ENCODE measurements at regions of chr6 and their contacts with region 1.

Region 1: GRCh38 chr6:27132532-27133280 is 114.8 kb upstream of the PRSS16 start:
- DNase-seq: peak; percentile 95
- H3K4me3 Mint-ChIP-seq: no peak overlapping the region
- H3K27ac Mint-ChIP-seq: no peak overlapping the region
- H3K4me1 Mint-ChIP-seq: peaks cover 60% of the 10 kb centered on the region
- H3K27me3 Mint-ChIP-seq: no peaks in the 10 kb centered on the region

Region 2: GRCh38 chr6:26031595-26032339 is 1100.9 kb before region 1 on chr6:
- CTCF ChIA-PET with region 1: interaction called, 3 read pairs
- POLR2A ChIA-PET with region 1: interaction called, 22 read pairs
- DNase-seq: peak; percentile 92
- H3K4me3 Mint-ChIP-seq: peak overlapping the region; percentile 84
- H3K27ac Mint-ChIP-seq: peak overlapping the region; percentile 100
- H3K4me1 Mint-ChIP-seq: peaks cover 74% of the 10 kb centered on the region
- H3K27me3 Mint-ChIP-seq: peaks cover 4% of the 10 kb centered on the region

Region 3: GRCh38 chr6:26249957-26250697 is 882.6 kb before region 1 on chr6:
- CTCF ChIA-PET with region 1: no interaction called
- POLR2A ChIA-PET with region 1: interaction called, 51 read pairs
- DNase-seq: peak; percentile 84
- H3K4me3 Mint-ChIP-seq: peak overlapping the region; percentile 90
- H3K27ac Mint-ChIP-seq: peak overlapping the region; percentile 93
- H3K4me1 Mint-ChIP-seq: peaks cover 42% of the 10 kb centered on the region
- H3K27me3 Mint-ChIP-seq: no peaks in the 10 kb centered on the region

Region 4: DNA sequence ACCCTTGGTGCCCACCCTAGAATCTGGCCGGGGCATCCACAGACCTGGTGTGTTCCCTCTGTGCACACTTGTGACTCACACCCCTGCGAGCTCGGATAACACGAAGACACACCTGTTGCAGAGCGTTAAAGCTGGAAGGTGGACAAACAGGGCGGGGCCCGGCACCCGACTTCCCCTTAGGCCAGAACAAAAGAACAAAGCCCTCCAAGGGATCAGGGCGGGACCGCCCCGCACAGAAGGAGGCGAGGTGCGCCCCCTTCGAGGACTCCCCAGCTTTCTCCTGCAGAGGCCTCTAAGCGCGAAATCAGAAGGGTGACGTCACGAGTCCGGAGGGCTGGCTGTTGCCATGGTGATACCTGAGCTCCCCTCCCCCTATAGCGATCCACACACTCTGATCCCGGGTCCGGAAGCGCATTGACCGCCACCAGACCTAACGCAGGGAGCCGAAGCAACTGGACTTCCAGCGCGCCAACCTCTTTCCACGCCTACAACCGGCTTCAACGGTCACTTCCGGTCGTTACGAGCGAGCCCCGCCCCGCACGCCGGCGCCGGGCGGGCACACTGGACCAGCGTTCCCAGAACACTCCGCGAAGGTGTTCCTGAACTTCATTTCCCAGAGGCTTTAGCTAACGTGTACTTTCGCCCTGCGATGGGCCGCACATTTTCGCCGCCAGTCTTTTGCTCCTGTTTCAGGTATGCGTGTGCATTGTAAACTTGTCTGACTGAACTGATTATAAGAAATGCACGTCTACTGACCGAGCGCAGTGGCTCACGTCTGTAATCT is 340.1 kb after region 1 on chr6 and contains the start of gene ZNF184:
- CTCF ChIA-PET with region 1: interaction called, 3 read pairs
- POLR2A ChIA-PET with region 1: interaction called, 14 read pairs
- DNase-seq: peak; percentile 90
- H3K4me3 Mint-ChIP-seq: peak within 1 kb of the TSS; percentile 85
- H3K27ac Mint-ChIP-seq: peak within 1 kb of the TSS; percentile 93
- H3K4me1 Mint-ChIP-seq: peaks cover 52% of the 10 kb centered on the region
- H3K27me3 Mint-ChIP-seq: peaks cover 4% of the 10 kb centered on the region
- total RNA-seq, gene ZNF184: 16.2 to 16.3 TPM

Region 5: DNA sequence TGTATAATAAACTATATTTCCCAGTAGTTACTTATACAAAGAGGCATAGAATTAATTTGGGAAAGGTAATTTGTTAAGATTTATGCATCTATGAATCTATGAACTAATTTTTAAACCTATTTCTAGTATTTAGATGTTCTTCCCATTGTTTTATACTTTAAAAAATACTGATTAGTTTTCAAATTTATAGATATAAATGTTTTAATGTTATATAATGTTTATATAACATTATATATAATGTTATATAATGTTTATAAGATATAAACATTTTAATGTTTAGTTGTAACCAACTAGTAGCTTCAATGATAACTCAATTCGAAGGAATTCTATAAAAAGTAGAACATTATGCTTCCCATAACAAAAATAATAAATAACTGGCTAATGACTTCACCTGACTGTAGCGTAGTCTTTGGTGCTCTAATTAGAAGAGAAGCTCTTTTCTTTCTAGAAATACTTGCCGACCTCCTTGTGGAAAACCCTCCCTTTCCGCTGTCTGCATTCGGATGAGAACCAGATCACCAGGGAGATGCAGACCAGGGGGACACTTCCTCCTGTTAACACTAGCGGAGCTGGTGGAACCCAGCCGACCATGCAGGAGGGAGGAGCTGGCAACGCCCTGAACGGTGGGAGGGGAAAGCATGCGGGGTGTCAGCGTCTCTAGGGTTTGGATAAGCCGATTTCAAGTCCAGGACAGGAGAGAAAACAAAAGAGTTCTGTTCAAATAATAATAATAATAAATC is 621.1 kb after region 1 on chr6:
- CTCF ChIA-PET with region 1: no interaction called
- POLR2A ChIA-PET with region 1: interaction called, 12 read pairs
- DNase-seq: peak; percentile 80
- H3K4me3 Mint-ChIP-seq: peak overlapping the region; percentile 73
- H3K27ac Mint-ChIP-seq: peak overlapping the region; percentile 100
- H3K4me1 Mint-ChIP-seq: peaks cover 48% of the 10 kb centered on the region
- H3K27me3 Mint-ChIP-seq: peaks cover 5% of the 10 kb centered on the region

Region 6: DNA sequence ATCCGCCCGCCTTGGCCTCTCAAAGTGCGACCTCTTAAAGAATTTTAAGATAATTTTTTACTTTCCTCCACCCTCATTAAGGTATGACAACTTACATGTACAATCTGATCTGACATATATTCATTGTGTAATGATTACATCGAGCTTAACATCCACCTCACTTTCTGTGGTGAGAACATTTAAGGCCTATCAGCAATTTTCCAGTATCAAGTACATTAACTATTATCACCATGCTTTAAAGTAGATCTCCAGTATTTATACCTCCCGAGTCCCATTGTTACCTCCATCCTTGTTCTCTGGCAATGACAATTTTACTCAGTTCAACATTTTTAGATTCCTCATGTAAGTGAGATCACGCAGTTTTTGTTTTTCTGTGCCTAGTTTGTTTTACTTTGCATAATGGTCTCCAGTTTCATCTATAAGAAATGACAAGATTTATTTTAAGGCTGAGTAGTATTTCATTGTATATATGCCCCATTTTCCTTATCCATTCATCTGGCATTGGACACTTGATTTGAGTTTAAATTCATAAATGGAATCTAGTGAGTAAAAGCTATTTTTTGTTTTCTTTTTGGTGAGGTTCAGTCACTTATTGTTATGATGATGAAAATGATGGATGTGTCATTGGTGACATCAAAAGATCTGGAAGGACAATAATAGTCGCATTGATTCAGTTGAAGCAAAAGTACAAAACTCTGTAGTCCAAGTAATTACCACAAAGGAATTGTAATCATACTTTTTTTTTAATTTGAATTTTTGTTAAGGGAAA is 692.5 kb after region 1 on chr6:
- CTCF ChIA-PET with region 1: no interaction called
- POLR2A ChIA-PET with region 1: interaction called, 61 read pairs
- DNase-seq: no peak
- H3K4me3 Mint-ChIP-seq: peak overlapping the region; percentile 82
- H3K27ac Mint-ChIP-seq: peak overlapping the region; percentile 99
- H3K4me1 Mint-ChIP-seq: peaks cover 51% of the 10 kb centered on the region
- H3K27me3 Mint-ChIP-seq: no peaks in the 10 kb centered on the region